Cardiac septum (tissue), 1 donor: ENCODE measurements at regions of chr6 and their contacts with region 1.

Region 1: GRCh38 chr6:108565893-108566292 is 5.2 kb downstream of the FOXO3 start:
- DNase-seq: no peak

Region 2: DNA sequence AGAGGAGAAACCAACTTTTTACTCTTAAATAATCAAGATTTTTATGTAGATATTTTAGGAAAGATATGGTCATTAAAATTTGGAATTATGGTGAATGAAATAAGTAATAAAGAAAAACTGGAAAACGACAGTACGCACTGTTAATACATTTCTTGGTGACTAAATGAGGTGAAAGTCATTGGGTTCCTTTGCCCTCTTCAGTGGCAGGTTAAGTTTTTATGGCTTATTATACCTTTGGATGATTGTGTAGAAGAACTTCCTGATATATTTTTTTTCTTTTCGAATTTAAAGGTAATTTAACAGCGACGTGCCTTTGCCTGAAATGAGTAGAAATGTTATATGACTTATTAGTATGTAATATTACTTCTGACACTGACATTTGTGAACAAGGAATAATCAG is 38.3 kb after region 1 on chr6:
- intact Hi-C with region 1: loop called (anchors 5 kb)
- DNase-seq: no peak

Region 3: GRCh38 chr6:108689247-108690161 is 123.6 kb after region 1 on chr6:
- intact Hi-C with region 1: loop called (anchors 5 kb)
- DNase-seq: peak; percentile 93